Calu3 (cell line): ENCODE measurements at regions of chr9 and their contacts with region 1.

Region 1: DNA sequence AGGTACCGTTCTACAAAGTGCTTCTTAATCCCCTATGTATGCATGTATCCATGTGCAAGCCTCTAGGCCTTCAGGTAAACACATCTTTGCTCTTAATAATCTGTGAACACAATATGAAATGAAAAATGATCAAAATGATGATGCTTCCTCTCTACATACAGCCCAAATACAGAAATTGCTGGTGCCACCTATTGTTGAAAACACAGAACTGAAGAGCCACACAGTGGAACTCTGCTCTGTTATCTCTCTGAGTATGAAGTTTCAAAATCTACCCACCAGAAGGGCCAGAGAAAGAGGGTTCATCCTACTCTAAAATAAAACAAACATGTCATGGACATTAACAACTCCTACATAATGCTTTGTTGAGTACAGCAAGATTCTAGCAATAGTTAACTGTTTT is 71.3 kb downstream of the GLIS3 start:
- DNase-seq: no peak
- H3K4me3 Mint-ChIP-seq: no peak overlapping the region
- H3K27ac Mint-ChIP-seq: peak overlapping the region; percentile 58
- H3K4me1 Mint-ChIP-seq: peaks cover 66% of the 10 kb centered on the region
- H3K27me3 Mint-ChIP-seq: no peaks in the 10 kb centered on the region
- CTCF ChIP-seq: no peak

Region 2: GRCh38 chr9:3906432-3907213 is 322.0 kb before region 1 on chr9:
- CTCF ChIA-PET with region 1: no interaction called
- intact Hi-C with region 1: loop called (anchors 10 kb)
- DNase-seq: peak; percentile 54
- H3K4me3 Mint-ChIP-seq: peak overlapping the region; percentile 20
- H3K27ac Mint-ChIP-seq: peak overlapping the region; percentile 82
- H3K4me1 Mint-ChIP-seq: peaks cover 48% of the 10 kb centered on the region
- H3K27me3 Mint-ChIP-seq: no peaks in the 10 kb centered on the region
- CTCF ChIP-seq: no peak

Region 3: DNA sequence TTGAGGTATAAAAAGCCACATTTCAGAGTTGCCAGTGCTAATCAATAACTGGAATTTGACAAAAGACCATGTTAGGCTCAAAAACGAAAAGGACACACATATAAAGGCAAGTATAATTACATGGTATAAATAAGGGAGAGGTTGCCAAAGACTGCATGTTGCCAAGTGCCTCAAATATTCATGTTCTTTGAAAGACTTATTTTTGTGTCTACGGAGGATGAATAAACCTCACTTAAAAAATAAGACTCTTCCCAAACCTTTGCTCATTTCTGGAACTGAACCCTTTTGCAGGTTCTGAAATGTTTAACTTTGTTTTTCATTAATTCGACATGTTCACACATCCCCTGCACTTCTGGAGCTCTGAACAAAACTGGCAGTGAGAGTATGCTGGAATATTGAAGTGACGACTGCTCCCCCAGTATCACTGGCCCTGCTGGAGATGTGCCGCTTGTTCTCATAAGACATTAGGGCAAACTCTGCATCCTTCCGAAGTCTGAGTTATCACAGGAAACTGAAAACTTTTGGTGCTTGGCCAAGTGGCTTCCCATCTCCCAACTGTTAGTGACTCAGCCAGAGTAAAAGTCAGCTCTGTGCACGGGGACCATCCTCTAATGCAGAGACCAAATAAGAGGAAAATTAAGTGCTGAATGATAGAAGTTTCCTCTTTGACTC is 265.5 kb before region 1 on chr9:
- CTCF ChIA-PET with region 1: no interaction called
- intact Hi-C with region 1: loop called (anchors 10 kb)
- DNase-seq: no peak
- H3K4me3 Mint-ChIP-seq: peak overlapping the region; percentile 30
- H3K27ac Mint-ChIP-seq: no peak overlapping the region
- H3K4me1 Mint-ChIP-seq: peaks cover 28% of the 10 kb centered on the region
- H3K27me3 Mint-ChIP-seq: no peaks in the 10 kb centered on the region
- CTCF ChIP-seq: no peak

Region 4: GRCh38 chr9:4077499-4078102 is 151.0 kb before region 1 on chr9:
- CTCF ChIA-PET with region 1: interaction called, 6 read pairs
- intact Hi-C with region 1: loop called (anchors 2 kb)
- DNase-seq: peak; percentile 84
- H3K4me3 Mint-ChIP-seq: no peak overlapping the region
- H3K27ac Mint-ChIP-seq: peak overlapping the region; percentile 78
- H3K4me1 Mint-ChIP-seq: peaks cover 40% of the 10 kb centered on the region
- H3K27me3 Mint-ChIP-seq: no peaks in the 10 kb centered on the region
- CTCF ChIP-seq: peak; percentile 66

Region 5: GRCh38 chr9:4147476-4148230 is 81.0 kb before region 1 on chr9:
- CTCF ChIA-PET with region 1: interaction called, 15 read pairs
- intact Hi-C with region 1: loop called (anchors 5 kb)
- DNase-seq: peak; percentile 29
- H3K4me3 Mint-ChIP-seq: peak overlapping the region; percentile 29
- H3K27ac Mint-ChIP-seq: peak overlapping the region; percentile 61
- H3K4me1 Mint-ChIP-seq: peaks cover 56% of the 10 kb centered on the region
- H3K27me3 Mint-ChIP-seq: no peaks in the 10 kb centered on the region
- CTCF ChIP-seq: no peak